Activated T-helper 2 cell treated with anti-CD3 and anti-CD28 coated beads, Interferon-gamma antibody, Interleukin-2, Interleukin-4, amounts not matched to agents 10 μg/mL and 5 μg/mL and 100 μg/mL, durations not matched to agents 14 hours and 24 hours and 36 hours (primary cell): ENCODE measurements at regions of chr7 and their contacts with region 1.

Region 1: DNA sequence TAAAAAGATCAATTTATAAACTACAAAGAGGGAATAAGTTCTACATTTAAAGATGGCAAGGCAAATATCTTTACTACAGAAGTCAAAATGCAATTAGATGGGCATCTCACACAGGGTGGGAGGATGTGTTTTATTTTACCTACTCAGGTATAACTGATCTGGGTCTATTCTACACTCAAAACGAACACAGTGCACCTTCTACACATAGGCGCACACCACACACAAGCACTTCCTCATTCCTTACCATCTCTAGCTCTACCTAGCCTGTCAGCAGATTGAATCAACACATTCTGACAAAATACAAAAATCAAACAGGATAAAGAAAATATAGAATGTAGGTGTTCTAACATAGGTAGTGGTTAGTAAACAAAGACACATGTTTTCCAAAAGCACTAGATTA is 64.8 kb downstream of the SGCE start:
- DNase-seq: no peak
- H3K4me3 Mint-ChIP-seq: no peak overlapping the region
- H3K27ac Mint-ChIP-seq: no peak overlapping the region
- H3K4me1 Mint-ChIP-seq: no peaks in the 10 kb centered on the region
- H3K27me3 Mint-ChIP-seq: no peaks in the 10 kb centered on the region

Region 2: GRCh38 chr7:94650162-94651051 is 59.2 kb after region 1 on chr7:
- intact Hi-C with region 1: loop called (anchors 5 kb)
- DNase-seq: no peak
- H3K4me3 Mint-ChIP-seq: no peak overlapping the region
- H3K27ac Mint-ChIP-seq: no peak overlapping the region
- H3K4me1 Mint-ChIP-seq: peaks cover 8% of the 10 kb centered on the region
- H3K27me3 Mint-ChIP-seq: peaks cover 49% of the 10 kb centered on the region